CD4-positive, alpha-beta memory T cell (primary cell): ENCODE measurements at regions of chr4 and their contacts with region 1.

Region 1: DNA sequence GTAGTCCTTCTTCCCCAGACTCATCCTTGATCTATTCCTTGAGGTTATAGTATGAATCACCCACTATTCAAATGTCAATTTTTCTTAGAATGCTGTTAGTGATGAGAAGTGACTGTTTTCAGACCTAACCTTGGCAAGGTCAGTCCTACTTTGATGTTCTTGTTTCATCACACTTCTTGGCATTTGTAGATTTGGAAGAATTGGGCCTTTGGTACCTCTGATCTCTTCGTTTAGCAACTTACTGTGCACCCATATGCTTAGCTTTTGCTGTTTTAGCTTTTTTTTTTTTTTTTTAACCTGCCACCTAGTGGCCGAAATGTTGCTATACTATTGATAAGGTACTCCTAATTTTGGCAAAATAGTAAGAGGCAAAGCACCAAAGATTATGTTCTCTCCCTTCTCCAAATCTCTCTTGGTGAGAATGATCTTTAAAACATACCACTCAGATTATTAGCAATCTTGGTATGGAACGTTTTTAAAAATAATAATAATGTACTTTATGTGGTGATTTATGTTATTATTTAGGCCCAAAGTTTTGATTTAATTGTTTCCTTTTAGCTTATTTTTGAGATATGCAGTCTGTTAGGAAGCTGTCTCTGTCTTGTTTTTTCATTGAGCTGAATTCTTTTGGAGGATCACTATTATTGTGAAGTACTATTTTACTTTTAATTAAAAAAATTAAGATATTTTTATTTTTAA is 16.6 kb downstream of the DCK start:
- DNase-seq: peak in 4 of 5 donors; percentile 28 to 56 (median 49)
- H3K4me3 ChIP-seq: no peak overlapping the region
- H3K4me3 Mint-ChIP-seq: peak overlapping the region in 2 of 8 donors; percentile 18 to 29
- H3K27ac ChIP-seq: peak overlapping the region; percentile 5
- H3K27ac Mint-ChIP-seq: peak overlapping the region; percentile 7 to 79 (median 60)
- H3K4me1 ChIP-seq: peaks cover 46% of the 10 kb centered on the region
- H3K4me1 Mint-ChIP-seq: peaks cover 22 to 43% (median 33%) of the 10 kb centered on the region in 4 donors
- H3K27me3 ChIP-seq: no peaks in the 10 kb centered on the region
- H3K27me3 Mint-ChIP-seq: no peaks in the 10 kb centered on the region

Region 2: GRCh38 chr4:70651864-70652506 is 358.1 kb before region 1 on chr4:
- CTCF ChIA-PET with region 1: interaction called, 7 read pairs
- POLR2A ChIA-PET with region 1: no interaction called
- intact Hi-C with region 1: loop called (anchors 1 kb)
- DNase-seq: peak in 4 of 5 donors; percentile 27 to 47 (median 32)
- H3K4me3 ChIP-seq: no peak overlapping the region
- H3K4me3 Mint-ChIP-seq: no peak overlapping the region
- H3K27ac ChIP-seq: no peak overlapping the region
- H3K27ac Mint-ChIP-seq: no peak overlapping the region
- H3K4me1 ChIP-seq: no peaks in the 10 kb centered on the region
- H3K4me1 Mint-ChIP-seq: peaks cover 0 to 4% (median 3%) of the 10 kb centered on the region in 4 donors
- H3K27me3 ChIP-seq: peaks cover 7% of the 10 kb centered on the region
- H3K27me3 Mint-ChIP-seq: peaks cover 2 to 5% of the 10 kb centered on the region in 2 donors

Region 3: DNA sequence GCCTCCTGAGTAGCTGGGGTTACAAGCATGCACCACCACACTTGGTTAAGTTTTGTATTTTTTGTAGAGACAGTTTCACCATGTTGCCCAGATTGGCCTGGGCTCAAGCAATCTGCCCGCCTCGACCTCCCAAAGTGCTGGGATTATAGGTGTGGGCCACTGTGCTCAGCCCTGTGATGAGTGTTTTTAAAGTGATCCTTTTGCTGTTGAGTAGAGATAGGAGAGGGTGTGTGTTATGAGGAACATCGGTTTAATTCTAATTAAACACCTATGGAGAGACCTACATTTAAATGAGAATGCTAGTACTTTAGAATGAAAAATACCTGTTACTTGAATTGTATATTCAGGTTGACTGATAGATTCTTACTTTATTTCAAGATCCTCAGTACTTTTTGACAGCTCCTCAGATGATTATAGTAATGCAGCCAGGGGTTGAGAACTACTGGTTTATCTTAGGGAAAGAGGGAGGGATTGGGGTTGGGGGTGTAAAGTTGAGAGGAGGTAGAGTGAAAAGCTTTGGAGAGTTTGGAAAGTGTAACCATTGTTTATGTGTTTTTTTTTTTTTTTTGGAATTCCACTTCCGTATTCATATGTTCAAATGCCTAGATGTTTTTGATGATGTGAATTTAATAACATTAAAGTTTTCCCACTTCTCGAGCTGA is 53.4 kb before region 1 on chr4:
- CTCF ChIA-PET with region 1: no interaction called
- POLR2A ChIA-PET with region 1: no interaction called
- intact Hi-C with region 1: no loop called
- DNase-seq: no peak
- H3K4me3 ChIP-seq: no peak overlapping the region
- H3K4me3 Mint-ChIP-seq: no peak overlapping the region
- H3K27ac ChIP-seq: no peak overlapping the region
- H3K27ac Mint-ChIP-seq: peak overlapping the region in 1 of 7 donors; percentile 41
- H3K4me1 ChIP-seq: no peaks in the 10 kb centered on the region
- H3K4me1 Mint-ChIP-seq: peaks cover 0 to 9% (median 7%) of the 10 kb centered on the region in 4 donors
- H3K27me3 ChIP-seq: no peaks in the 10 kb centered on the region
- H3K27me3 Mint-ChIP-seq: no peaks in the 10 kb centered on the region

Region 4: GRCh38 chr4:70984589-70984988 is 25.4 kb before region 1 on chr4:
- CTCF ChIA-PET with region 1: interaction called, 74 read pairs
- POLR2A ChIA-PET with region 1: no interaction called
- intact Hi-C with region 1: loop called (anchors 1 kb)
- DNase-seq: peak in 2 of 5 donors; percentile 22 to 30
- H3K4me3 ChIP-seq: no peak overlapping the region
- H3K4me3 Mint-ChIP-seq: no peak overlapping the region
- H3K27ac ChIP-seq: no peak overlapping the region
- H3K27ac Mint-ChIP-seq: no peak overlapping the region
- H3K4me1 ChIP-seq: no peaks in the 10 kb centered on the region
- H3K4me1 Mint-ChIP-seq: no peaks in the 10 kb centered on the region
- H3K27me3 ChIP-seq: no peaks in the 10 kb centered on the region
- H3K27me3 Mint-ChIP-seq: no peaks in the 10 kb centered on the region

Region 5: GRCh38 chr4:71020611-71021010 is 10.6 kb after region 1 on chr4:
- CTCF ChIA-PET with region 1: interaction called, 13 read pairs
- POLR2A ChIA-PET with region 1: no interaction called
- intact Hi-C with region 1: no loop called
- DNase-seq: no peak
- H3K4me3 ChIP-seq: no peak overlapping the region
- H3K4me3 Mint-ChIP-seq: no peak overlapping the region
- H3K27ac ChIP-seq: no peak overlapping the region
- H3K27ac Mint-ChIP-seq: peak overlapping the region in 1 of 7 donors; percentile 48
- H3K4me1 ChIP-seq: no peaks in the 10 kb centered on the region
- H3K4me1 Mint-ChIP-seq: peaks cover 7 to 33% (median 12%) of the 10 kb centered on the region in 4 donors
- H3K27me3 ChIP-seq: no peaks in the 10 kb centered on the region
- H3K27me3 Mint-ChIP-seq: no peaks in the 10 kb centered on the region

Region 6: DNA sequence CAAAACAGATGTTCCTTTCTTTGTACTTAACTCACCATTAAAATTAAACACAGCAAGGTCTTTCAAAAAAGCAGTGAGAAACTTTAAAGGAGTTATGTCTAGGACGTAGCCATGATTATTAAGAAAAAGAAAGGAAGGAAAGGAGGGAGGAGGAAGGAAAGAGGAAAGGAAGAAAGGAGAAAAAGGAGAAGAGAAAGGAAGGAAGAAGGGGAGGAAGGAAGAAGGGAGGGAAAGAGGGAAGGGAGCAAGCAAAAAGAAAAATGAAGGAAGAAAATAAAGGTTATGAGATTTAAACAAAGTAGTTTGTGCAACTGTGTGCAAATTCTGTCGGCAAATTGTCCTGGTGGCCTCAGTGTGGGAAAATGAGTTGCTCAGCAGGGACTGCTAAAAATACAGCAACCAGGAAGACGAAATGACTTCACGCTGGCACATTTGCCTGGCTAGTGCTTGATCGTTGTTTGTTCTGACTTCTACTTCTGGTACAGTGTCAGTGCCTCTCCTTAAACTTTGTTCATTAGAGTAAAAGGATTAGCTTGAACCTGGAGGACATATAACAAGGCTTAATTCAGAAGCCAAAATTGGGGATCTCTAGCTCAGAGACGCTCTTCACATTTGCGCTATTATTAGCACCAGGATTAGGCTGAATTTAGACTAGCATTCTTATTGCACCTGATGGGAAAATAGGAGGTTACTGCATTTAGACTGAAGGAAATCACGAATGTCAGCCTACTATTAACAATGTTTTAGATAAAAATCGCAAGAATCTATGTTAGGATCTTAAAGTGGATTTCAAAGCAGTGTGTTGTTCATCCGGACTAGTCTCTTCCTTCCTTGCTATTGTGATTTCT is 64.6 kb after region 1 on chr4:
- CTCF ChIA-PET with region 1: no interaction called
- POLR2A ChIA-PET with region 1: no interaction called
- intact Hi-C with region 1: no loop called
- DNase-seq: no peak
- H3K4me3 ChIP-seq: no peak overlapping the region
- H3K4me3 Mint-ChIP-seq: no peak overlapping the region
- H3K27ac ChIP-seq: no peak overlapping the region
- H3K27ac Mint-ChIP-seq: peak overlapping the region in 1 of 7 donors; percentile 35
- H3K4me1 ChIP-seq: no peaks in the 10 kb centered on the region
- H3K4me1 Mint-ChIP-seq: no peaks in the 10 kb centered on the region
- H3K27me3 ChIP-seq: no peaks in the 10 kb centered on the region
- H3K27me3 Mint-ChIP-seq: peaks cover 3 to 7% of the 10 kb centered on the region in 2 donors